Ascending aorta (tissue), 2 donors: ENCODE measurements at regions of chr2 and their contacts with region 1.

Region 1: GRCh38 chr2:61538200-61538919 is at the start of gene XPO1:
- DNase-seq: peak; percentile 97 to 99
- H3K4me3 ChIP-seq: peak within 1 kb of the TSS; percentile 86 to 98
- H3K27ac ChIP-seq: peak within 1 kb of the TSS; percentile 96 to 98
- H3K4me1 ChIP-seq: peaks cover 0 to 16% of the 10 kb centered on the region in 2 donors
- H3K27me3 ChIP-seq: no peaks in the 10 kb centered on the region
- CTCF ChIP-seq: no peak
- total RNA-seq, gene XPO1: 47.9 TPM

Region 2: DNA sequence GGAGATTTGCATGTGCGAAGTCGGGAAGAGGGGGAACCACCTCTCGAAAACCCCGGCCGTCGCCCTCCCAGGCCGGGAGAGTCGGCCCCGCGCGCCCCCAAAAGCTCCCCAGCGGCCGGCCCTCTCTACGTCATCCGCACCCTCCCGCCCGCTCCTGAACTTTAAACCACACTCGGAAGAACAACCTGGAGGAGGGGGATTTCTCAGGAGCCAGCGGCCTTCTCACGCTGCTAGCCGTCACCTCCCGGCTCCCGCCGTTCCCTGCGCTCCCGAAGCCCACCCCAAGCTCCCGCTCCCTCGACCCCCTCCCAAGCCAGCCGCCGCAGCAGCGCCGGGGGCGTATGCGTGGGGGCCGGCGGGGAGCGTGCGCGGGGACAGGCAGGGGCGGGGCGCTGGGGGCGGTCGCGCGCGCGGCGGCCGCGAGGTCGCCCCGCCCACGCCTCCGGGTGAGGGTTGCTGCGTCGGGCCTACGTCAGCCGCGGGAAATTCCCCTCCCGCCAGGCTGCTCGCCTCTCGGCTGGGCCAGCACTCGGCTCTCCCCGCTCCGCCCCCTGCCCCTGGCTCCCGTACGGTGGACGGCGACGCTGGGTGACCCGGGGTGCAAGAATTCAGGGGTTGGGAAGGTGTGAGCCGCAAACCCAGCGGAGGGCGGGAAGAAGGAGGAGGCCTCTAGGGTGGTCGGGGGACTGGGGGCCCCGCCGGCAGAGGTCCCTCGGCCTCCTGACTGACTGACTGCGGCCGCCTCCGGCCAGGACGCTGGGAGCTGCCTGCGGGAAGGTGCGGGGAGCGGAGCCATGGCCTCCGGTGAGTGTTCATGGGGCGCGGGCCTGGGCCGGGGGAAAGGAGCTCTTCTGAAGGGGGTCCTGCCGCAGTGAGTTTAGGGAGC is 657.1 kb before region 1 on chr2 and contains the start of gene REL:
- intact Hi-C with region 1: loop called (anchors 1 kb)
- DNase-seq: peak; percentile 51 to 92
- H3K4me3 ChIP-seq: peak within 1 kb of the TSS; percentile 85 to 93
- H3K27ac ChIP-seq: peak within 1 kb of the TSS; percentile 91 to 95
- H3K4me1 ChIP-seq: peaks cover 0 to 6% of the 10 kb centered on the region in 2 donors
- H3K27me3 ChIP-seq: no peaks in the 10 kb centered on the region
- CTCF ChIP-seq: no peak
- total RNA-seq, gene REL: 5.3 TPM

Region 3: GRCh38 chr2:61176755-61177726 is 361.3 kb before region 1 on chr2:
- intact Hi-C with region 1: loop called (anchors 1 kb)
- DNase-seq: peak; percentile 76 to 96
- H3K4me3 ChIP-seq: peak overlapping the region; percentile 79 to 90
- H3K27ac ChIP-seq: peak overlapping the region; percentile 98 to 99
- H3K4me1 ChIP-seq: peaks cover 12 to 40% of the 10 kb centered on the region in 2 donors
- H3K27me3 ChIP-seq: no peaks in the 10 kb centered on the region
- CTCF ChIP-seq: peak; percentile 2 to 12 (median 7)

Region 4: DNA sequence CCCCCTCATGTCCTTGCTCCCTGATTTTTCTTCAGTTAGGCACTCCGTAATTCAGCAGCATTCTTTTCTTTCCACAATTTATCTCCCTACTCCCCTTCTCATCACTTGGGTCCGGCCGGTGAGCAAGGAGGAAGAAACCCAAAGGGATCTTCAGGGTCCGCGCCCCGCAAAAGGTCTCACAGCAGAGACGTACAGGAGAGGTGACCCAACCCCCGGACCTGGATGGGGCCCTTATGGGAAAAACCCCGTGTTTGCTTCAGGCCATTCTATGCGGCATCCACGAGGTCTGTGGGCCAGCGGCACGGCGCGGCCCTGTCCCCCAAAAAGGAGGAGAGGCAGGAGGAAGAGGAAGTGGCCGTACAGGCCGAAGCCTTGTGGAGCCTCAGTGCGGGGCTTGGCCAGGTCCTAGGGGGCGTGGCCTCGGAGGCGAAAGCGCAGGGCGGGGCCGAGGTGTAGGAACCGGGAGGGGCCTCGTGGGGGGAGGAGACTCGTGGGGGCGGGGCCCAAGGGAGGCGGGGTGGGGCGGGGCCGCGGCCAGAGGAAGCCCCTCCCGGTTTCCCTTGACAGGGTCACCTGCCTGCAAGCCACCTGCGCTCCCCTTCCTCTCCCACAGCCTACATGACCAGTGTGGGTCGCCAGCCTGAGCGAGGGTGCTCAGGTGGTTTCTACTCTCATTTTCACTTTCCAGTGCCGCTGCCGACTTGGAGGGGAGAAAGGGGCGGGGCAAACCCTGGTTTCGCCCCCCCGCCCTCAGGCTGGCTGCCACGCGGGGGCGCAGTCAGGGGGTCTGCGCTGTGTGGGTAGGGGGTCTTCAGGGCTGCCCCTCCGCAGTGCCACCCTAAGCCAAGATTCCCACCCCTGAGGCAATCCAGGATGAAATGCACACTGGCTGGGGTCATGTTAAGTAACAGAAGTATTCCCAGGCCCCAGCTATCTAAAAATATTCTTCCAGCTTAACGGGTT is 156.2 kb after region 1 on chr2:
- intact Hi-C with region 1: loop called (anchors 2 kb)
- DNase-seq: peak; percentile 66 to 96
- H3K4me3 ChIP-seq: peak overlapping the region; percentile 63 to 71
- H3K27ac ChIP-seq: peak overlapping the region; percentile 61 to 67
- H3K4me1 ChIP-seq: no peaks in the 10 kb centered on the region
- H3K27me3 ChIP-seq: no peaks in the 10 kb centered on the region
- CTCF ChIP-seq: peak; percentile 23 to 62 (median 33)

Region 5: GRCh38 chr2:61888267-61889055 is 350.1 kb after region 1 on chr2 and contains the start of gene CCT4:
- intact Hi-C with region 1: loop called (anchors 1 kb)
- DNase-seq: peak; percentile 38 to 91
- H3K4me3 ChIP-seq: peak within 1 kb of the TSS; percentile 76 to 99
- H3K27ac ChIP-seq: peak within 1 kb of the TSS; percentile 92 to 97
- H3K4me1 ChIP-seq: peaks cover 3 to 6% of the 10 kb centered on the region in 2 donors
- H3K27me3 ChIP-seq: no peaks in the 10 kb centered on the region
- CTCF ChIP-seq: no peak
- total RNA-seq, gene CCT4: 35.3 TPM

Region 6: GRCh38 chr2:62511636-62512035 is 973.3 kb after region 1 on chr2:
- intact Hi-C with region 1: no loop called
- DNase-seq: no peak
- H3K4me3 ChIP-seq: no peak overlapping the region
- H3K27ac ChIP-seq: no peak overlapping the region
- H3K4me1 ChIP-seq: peaks cover 0 to 1% of the 10 kb centered on the region in 2 donors
- H3K27me3 ChIP-seq: no peaks in the 10 kb centered on the region
- CTCF ChIP-seq: no peak